Esophagus muscularis mucosa (tissue), 4 donors: ENCODE measurements at regions of chr5 and their contacts with region 1.

Region 1: DNA sequence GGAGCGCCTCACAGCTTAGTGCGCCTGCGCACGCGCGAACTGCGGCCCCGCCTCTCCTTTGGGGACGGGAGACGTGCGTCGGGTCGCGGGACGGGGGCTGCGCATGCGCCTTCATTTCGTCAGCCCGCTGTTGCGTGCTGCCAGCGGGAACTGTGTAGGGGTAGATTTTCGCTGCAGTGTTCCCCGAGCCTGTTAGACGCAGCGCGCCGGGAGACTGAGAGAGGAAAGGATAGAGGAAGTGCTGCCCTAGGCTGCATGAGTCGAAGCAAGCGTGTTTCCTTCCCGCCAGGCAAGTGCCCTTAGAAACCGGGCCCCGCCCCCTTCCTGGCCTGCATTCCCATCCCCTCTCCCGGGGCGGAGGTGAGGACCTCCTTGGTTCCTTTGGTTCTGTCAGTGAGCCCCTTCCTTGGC is 12.3 kb downstream of the ITGA1 start:
- DNase-seq: peak; percentile 98
- H3K4me3 ChIP-seq: peak overlapping the region; percentile 58 to 64 (median 64)
- H3K27ac ChIP-seq: peak overlapping the region; percentile 91 to 94 (median 93)
- H3K4me1 ChIP-seq: peaks cover 64 to 98% (median 94%) of the 10 kb centered on the region in 4 donors
- H3K27me3 ChIP-seq: no peaks in the 10 kb centered on the region
- CTCF ChIP-seq: no peak
- EP300 ChIP-seq: no peak
- POLR2A ChIP-seq: peak; percentile 69

Region 2: DNA sequence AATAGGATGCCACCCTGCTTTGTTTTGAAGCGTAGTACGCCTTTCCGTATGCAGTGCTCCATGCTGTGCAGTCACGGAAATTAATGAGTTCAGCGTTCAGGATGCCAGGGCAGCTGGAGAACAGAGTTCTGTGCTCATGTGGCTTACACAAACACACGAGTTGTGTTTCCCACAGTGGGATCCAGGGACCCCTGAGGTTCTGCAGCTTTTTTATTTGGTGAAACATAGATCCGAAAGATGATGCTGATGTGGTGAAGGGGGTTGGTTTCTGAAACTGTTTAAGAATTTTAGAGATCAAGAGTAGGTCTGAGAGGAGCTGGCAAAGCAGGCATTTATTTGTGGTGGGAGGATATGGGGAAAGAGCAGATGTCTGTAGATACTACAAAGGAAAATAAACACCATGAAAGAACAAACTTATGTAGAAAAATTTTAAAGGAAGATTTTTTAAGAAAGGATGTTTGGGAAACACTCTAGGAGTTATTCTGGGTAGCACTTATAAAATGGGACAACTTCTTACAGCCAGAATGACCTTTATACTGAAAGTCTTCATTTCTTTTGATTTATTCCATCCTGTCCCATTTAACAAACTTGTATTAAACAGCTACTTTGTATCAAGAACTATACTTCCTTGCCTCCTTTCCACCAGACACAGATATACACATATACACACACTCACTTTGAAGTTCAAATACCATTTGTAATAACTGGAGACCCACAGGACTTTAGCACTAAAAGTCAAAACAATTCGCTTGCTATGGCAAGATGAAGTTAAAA is 40.5 kb after region 1 on chr5:
- intact Hi-C with region 1: loop called (anchors 10 kb)
- DNase-seq: no peak
- H3K4me3 ChIP-seq: peak overlapping the region in 3 of 4 donors; percentile 5 to 32 (median 24)
- H3K27ac ChIP-seq: peak overlapping the region; percentile 70 to 83 (median 80)
- H3K4me1 ChIP-seq: peaks cover 13 to 95% (median 92%) of the 10 kb centered on the region in 4 donors
- H3K27me3 ChIP-seq: no peaks in the 10 kb centered on the region
- CTCF ChIP-seq: no peak
- EP300 ChIP-seq: no peak
- POLR2A ChIP-seq: no peak

Region 3: GRCh38 chr5:52864371-52864770 is 64.4 kb after region 1 on chr5:
- intact Hi-C with region 1: loop called (anchors 10 kb)
- DNase-seq: no peak
- H3K4me3 ChIP-seq: peak overlapping the region in 2 of 4 donors; percentile 18 to 20
- H3K27ac ChIP-seq: peak overlapping the region; percentile 73 to 82 (median 75)
- H3K4me1 ChIP-seq: peaks cover 17 to 73% (median 70%) of the 10 kb centered on the region in 4 donors
- H3K27me3 ChIP-seq: no peaks in the 10 kb centered on the region
- CTCF ChIP-seq: no peak
- EP300 ChIP-seq: no peak
- POLR2A ChIP-seq: no peak

Region 4: DNA sequence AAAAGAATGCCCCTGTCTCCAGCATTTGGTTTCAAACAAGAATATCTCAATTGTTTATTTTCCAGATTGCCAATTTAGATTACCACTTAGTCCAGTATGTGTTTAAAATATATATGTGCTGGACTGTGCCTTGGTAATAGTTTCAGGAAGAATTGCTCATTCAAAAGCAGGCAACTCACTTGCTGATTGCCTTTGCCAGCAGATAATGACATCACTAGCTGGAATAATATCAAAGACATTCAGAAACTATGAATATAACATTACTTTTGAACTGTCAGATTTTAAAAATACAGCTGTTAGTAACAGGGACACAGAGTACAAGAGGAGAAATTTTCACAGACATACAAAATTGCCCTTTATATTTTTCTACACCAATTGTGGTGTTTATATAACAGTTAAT is 93.1 kb after region 1 on chr5:
- intact Hi-C with region 1: loop called (anchors 10 kb)
- DNase-seq: no peak
- H3K4me3 ChIP-seq: no peak overlapping the region
- H3K27ac ChIP-seq: peak overlapping the region; percentile 22 to 72 (median 65)
- H3K4me1 ChIP-seq: peaks cover 19 to 64% (median 60%) of the 10 kb centered on the region in 4 donors
- H3K27me3 ChIP-seq: no peaks in the 10 kb centered on the region
- CTCF ChIP-seq: no peak
- EP300 ChIP-seq: no peak
- POLR2A ChIP-seq: no peak